ENCODE measurements at regions of chrX and their contacts with region 1.

Region 1: DNA sequence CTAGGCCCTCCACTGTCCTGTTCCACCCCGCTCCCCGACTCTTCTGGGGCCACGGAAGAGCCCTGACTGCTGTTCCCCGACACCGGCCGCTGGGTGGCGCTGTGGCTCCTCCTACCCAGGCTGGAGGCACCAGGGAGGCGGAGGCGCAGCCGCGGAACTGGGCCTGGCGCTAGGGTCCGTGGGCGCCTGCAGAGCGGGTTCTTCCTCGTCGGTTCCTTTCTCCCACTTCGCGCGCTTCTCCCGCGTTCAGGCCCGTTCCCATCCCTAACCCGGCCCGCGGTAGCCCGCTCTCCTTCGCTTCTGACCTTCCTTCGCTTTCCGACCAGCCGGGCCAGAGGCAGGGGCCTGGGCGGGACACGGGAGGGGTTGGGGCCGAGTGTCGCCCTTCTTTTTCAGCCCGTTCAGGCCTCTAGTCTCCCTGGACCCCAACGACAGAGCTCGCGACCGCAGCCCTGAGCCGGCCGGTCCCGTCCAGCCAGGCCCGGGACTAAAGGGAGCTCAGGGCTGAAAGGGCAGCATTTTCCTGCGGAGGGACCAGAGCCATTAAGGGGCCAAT is 34.3 kb downstream of the NALF2 start:
- DNase-seq: peak; percentile 69
- H3K4me3 ChIP-seq: peak overlapping the region; percentile 64
- H3K27ac ChIP-seq: no peak overlapping the region
- H3K4me1 ChIP-seq: peaks cover 20% of the 10 kb centered on the region
- H3K27me3 ChIP-seq: no peaks in the 10 kb centered on the region
- CTCF ChIP-seq: peak; percentile 82

Region 2: GRCh38 chrX:69759921-69760625 is 221.7 kb after region 1 on chrX:
- intact Hi-C with region 1: no loop called
- DNase-seq: no peak
- H3K4me3 ChIP-seq: no peak overlapping the region
- H3K27ac ChIP-seq: no peak overlapping the region
- H3K4me1 ChIP-seq: no peaks in the 10 kb centered on the region
- H3K27me3 ChIP-seq: no peaks in the 10 kb centered on the region
- CTCF ChIP-seq: no peak

Region 3: GRCh38 chrX:70030301-70030767 is 491.9 kb after region 1 on chrX:
- intact Hi-C with region 1: loop called (anchors 2 kb)
- DNase-seq: no peak
- H3K4me3 ChIP-seq: no peak overlapping the region
- H3K27ac ChIP-seq: no peak overlapping the region
- H3K4me1 ChIP-seq: peaks cover 12% of the 10 kb centered on the region
- H3K27me3 ChIP-seq: no peaks in the 10 kb centered on the region
- CTCF ChIP-seq: peak; percentile 75

Measured in left ventricle myocardium inferior (tissue), 1 donor.